Activated CD4-positive, alpha-beta T cell treated with anti-CD3 and anti-CD28 coated beads for 36 hours (primary cell): ENCODE measurements at regions of chr16 and their contacts with region 1.

Region 1: GRCh38 chr16:28943281-28943680 is 7.5 kb upstream of the NFATC2IP start:
- DNase-seq: no peak
- ATAC-seq: no peak
- H3K4me3 Mint-ChIP-seq: no peak overlapping the region
- H3K27ac Mint-ChIP-seq: no peak overlapping the region
- H3K4me1 Mint-ChIP-seq: peaks cover 7% of the 10 kb centered on the region
- H3K27me3 Mint-ChIP-seq: no peaks in the 10 kb centered on the region

Region 2: GRCh38 chr16:28623172-28623711 is 320.0 kb before region 1 on chr16:
- CTCF ChIA-PET with region 1: no interaction called
- POLR2A ChIA-PET with region 1: no interaction called
- intact Hi-C with region 1: no loop called
- DNase-seq: peak; percentile 81
- ATAC-seq: peak; percentile 94
- H3K4me3 Mint-ChIP-seq: peak overlapping the region; percentile 77
- H3K27ac Mint-ChIP-seq: peak overlapping the region; percentile 88
- H3K4me1 Mint-ChIP-seq: peaks cover 16% of the 10 kb centered on the region
- H3K27me3 Mint-ChIP-seq: no peaks in the 10 kb centered on the region

Region 3: GRCh38 chr16:28846080-28846932 is 97.0 kb before region 1 on chr16 and contains the start of gene TUFM:
- CTCF ChIA-PET with region 1: interaction called, 8 read pairs
- POLR2A ChIA-PET with region 1: no interaction called
- intact Hi-C with region 1: loop called (anchors 1 kb)
- DNase-seq: peak; percentile 99
- ATAC-seq: peak; percentile 94
- H3K4me3 Mint-ChIP-seq: peak within 1 kb of the TSS; percentile 97
- H3K27ac Mint-ChIP-seq: peak within 1 kb of the TSS; percentile 97
- H3K4me1 Mint-ChIP-seq: peaks cover 23% of the 10 kb centered on the region
- H3K27me3 Mint-ChIP-seq: no peaks in the 10 kb centered on the region
- total RNA-seq, gene TUFM: 224 to 241 TPM

Region 4: DNA sequence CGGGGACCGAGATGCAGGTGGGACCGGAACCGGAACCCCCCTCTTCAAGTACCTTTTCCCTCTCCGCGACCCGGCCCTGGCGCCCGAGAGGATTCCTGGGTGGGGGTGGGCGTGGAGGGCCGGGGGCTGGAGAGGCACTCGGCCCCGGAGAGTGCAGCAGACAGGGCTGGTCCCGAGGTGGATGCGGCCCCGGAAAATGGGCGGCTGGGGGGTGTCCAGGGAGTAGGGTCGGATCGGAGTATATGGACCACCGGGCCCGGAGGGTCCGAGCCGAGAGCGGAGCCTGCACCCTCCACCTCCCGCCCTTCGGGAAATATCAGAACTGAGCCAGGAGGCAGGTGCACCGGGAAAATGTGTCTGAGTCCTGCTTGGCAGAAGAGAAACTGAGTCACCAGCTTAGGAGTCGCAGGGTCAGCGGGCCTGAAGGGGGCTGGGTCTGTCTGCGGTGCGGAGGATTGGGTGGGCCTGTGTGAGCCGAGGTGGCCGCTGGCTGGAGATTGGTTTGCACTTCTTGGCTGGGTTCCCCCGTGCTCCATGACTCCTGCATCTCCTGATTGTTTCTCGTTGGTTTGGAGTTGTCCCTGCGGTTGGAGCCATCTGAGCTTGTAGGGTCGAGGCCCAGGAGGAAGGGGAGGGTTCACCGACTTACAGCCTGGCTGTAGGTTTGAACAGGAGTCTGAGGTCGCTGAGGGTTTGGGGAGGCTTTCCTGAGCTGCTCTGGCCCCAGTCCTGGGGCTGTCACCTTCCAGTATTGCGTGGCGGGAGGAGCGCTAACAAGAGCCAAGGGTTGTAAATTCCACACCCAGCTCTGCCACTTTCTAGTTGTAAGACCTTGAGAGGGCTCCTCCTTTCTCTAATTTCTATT is 79.1 kb before region 1 on chr16:
- CTCF ChIA-PET with region 1: interaction called, 7 read pairs
- POLR2A ChIA-PET with region 1: no interaction called
- intact Hi-C with region 1: loop called in 1 of 2 experiments (anchors 1 kb)
- DNase-seq: peak; percentile 44
- ATAC-seq: no peak
- H3K4me3 Mint-ChIP-seq: peak overlapping the region; percentile 96
- H3K27ac Mint-ChIP-seq: peak overlapping the region; percentile 96
- H3K4me1 Mint-ChIP-seq: peaks cover 21% of the 10 kb centered on the region
- H3K27me3 Mint-ChIP-seq: no peaks in the 10 kb centered on the region

Region 5: DNA sequence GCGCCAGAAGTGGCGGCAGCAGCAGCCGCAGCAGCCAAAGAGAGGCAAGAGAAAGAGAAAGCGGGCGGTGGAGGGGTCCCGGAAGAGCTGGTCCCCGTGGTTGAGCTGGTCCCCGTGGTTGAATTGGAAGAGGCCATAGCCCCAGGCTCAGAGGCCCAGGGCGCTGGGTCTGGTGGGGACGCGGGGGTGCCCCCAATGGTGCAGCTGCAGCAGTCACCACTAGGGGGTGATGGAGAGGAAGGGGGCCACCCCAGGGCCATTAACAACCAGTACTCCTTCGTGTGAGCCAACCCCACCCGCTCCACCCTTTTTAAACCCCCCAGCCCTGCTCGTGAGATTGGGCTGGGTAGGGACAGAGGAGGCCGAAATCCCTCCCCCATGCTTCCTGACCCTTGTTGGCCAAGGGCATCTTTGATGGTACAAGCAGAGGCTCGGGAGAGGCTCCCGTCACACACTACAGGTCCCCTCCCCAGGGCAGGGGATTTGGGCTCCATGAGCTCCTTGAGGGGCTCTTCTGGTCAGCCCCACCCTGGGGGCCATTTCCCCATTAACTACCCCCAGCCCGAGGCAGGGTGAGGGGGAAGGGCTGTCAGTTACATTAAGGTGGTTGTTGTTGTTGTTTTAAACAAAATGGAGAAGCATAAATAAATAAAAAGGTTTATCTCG is 69.6 kb before region 1 on chr16:
- CTCF ChIA-PET with region 1: interaction called, 23 read pairs
- POLR2A ChIA-PET with region 1: no interaction called
- intact Hi-C with region 1: loop called in 1 of 2 experiments (anchors 1 kb)
- DNase-seq: peak; percentile 75
- ATAC-seq: peak; percentile 88
- H3K4me3 Mint-ChIP-seq: no peak overlapping the region
- H3K27ac Mint-ChIP-seq: no peak overlapping the region
- H3K4me1 Mint-ChIP-seq: peaks cover under 1% of the 10 kb centered on the region
- H3K27me3 Mint-ChIP-seq: no peaks in the 10 kb centered on the region

Region 6: DNA sequence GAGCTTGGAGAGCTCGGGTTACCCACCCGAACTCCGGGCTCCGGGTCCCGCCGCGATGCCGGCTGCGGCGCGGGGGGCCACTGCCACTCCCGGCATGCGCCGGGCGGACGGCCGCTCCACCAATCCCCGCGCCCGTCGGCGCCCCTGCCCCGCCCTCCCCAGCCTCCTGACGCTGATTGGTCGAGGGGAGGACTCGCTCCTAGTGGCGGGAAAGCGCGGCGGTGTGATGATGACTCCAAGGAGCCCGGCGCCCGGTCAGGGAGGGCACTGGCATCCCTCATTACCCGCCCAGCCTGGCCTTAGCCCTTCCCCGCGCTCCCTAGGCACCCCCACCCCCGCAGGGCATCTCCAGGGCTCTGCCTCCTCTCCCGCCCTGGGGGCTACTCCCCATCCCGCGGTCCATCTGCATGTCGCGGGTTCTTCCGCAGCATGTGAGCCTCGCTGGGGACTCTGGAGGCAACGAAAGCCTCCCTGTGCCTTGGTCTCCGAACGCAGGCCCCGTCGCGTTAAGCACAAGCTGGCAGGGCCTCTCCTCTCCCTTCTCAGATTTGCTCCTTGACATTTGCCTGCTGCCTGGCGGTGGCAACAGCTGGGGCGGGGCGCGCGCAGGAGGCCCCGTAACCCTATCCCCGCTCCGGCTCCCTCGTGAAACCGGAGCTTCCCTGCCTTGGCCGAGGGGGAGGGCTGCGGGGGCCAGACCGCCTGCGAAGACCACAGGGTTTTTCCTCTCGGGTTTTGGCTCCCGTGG is 63.3 kb before region 1 on chr16:
- CTCF ChIA-PET with region 1: interaction called, 23 read pairs
- POLR2A ChIA-PET with region 1: interaction called, 3 read pairs
- intact Hi-C with region 1: loop called in 1 of 2 experiments (anchors 1 kb)
- DNase-seq: peak; percentile 97
- ATAC-seq: peak; percentile 97
- H3K4me3 Mint-ChIP-seq: peak overlapping the region; percentile 85
- H3K27ac Mint-ChIP-seq: peak overlapping the region; percentile 76
- H3K4me1 Mint-ChIP-seq: peaks cover 20% of the 10 kb centered on the region
- H3K27me3 Mint-ChIP-seq: peaks cover 7% of the 10 kb centered on the region

Region 7: GRCh38 chr16:28918698-28919097 is 24.6 kb before region 1 on chr16:
- CTCF ChIA-PET with region 1: interaction called, 12 read pairs
- POLR2A ChIA-PET with region 1: no interaction called
- intact Hi-C with region 1: no loop called
- DNase-seq: no peak
- ATAC-seq: no peak
- H3K4me3 Mint-ChIP-seq: no peak overlapping the region
- H3K27ac Mint-ChIP-seq: no peak overlapping the region
- H3K4me1 Mint-ChIP-seq: peaks cover 3% of the 10 kb centered on the region
- H3K27me3 Mint-ChIP-seq: no peaks in the 10 kb centered on the region

Region 8: DNA sequence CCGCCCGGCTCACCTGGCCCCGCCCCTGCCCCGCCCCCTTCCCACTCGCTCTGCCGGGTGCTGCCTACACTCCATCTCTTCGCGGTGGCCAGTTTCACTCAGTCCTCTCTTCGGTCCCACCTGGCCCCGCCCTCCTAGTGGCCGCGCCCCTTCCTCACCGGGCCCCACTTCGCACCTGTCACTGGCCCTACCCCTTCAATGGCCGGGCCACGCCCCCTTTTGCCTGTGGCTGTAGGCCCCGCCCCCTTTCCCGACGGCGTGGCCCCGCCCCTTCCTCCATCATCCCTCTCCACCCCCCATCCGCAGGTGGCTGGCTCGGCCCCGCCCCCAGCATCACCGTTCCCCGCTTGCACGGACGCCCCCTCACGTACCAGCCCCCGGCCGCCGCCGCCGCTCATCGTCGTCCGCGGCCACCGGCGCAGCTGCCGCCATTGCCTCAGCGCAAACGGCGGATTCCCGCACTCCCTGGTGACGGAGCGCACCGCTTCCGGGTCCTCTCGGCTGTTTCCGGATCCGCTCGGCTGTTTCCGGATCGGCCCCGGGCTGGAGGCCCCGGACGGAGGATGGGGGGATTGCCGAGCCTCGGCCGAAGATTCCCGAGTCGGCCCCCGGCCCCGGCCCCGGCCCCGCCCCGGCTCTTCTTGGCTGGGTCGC is 18.4 kb before region 1 on chr16 and contains the start of gene RABEP2:
- CTCF ChIA-PET with region 1: interaction called, 12 read pairs
- POLR2A ChIA-PET with region 1: no interaction called
- intact Hi-C with region 1: loop called in 1 of 2 experiments (anchors 1 kb)
- DNase-seq: peak; percentile 99
- ATAC-seq: peak; percentile 93
- H3K4me3 Mint-ChIP-seq: peak within 1 kb of the TSS; percentile 87
- H3K27ac Mint-ChIP-seq: peak within 1 kb of the TSS; percentile 96
- H3K4me1 Mint-ChIP-seq: peaks cover 14% of the 10 kb centered on the region
- H3K27me3 Mint-ChIP-seq: no peaks in the 10 kb centered on the region
- total RNA-seq, gene RABEP2: 8.1 to 12.9 TPM